Activated T-helper 1 cell treated with anti-CD3 and anti-CD28 coated beads, Interleukin-12 subunit alpha, Interleukin-12 subunit beta, Interleukin-2, Interleukin-4 antibody, amounts not matched to agents 30 ng/mL and 10 ng/mL and 1 ng/mL, durations not matched to agents 14 hours and 24 hours and 36 hours (primary cell): ENCODE measurements at regions of chr3 and their contacts with region 1.

Region 1: DNA sequence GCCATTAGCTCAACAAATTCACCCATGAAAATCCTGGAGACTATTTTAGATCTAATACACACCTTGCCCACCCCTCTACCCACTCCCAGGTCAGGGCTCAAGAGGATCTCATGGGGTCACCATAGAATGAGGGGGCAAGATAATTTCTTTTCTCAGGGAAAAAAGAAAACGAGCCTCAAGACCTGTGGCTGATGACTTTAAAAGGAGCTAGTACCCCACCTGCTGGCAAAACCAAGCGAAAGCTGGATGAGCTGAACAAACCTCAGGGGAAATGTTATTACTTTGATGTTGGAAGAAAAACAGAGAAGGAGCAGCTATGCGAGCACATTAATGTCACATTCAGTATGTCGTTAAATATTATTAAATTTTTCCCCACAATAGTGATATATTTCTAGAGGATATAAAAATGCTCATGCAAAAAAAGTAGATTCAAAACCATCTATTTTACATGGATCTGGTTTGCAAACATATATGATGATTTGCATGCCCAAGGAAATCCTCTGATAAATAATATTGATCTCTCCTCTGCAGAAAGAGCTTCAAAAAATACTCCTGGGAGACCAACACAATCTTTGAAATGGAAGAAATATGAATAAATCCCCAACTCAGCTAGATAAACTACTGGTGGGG is 37.7 kb downstream of the PLD1 start:
- DNase-seq: no peak
- H3K4me3 Mint-ChIP-seq: no peak overlapping the region
- H3K27ac Mint-ChIP-seq: no peak overlapping the region
- H3K4me1 Mint-ChIP-seq: no peaks in the 10 kb centered on the region
- H3K27me3 Mint-ChIP-seq: peaks cover 21% of the 10 kb centered on the region

Region 2: DNA sequence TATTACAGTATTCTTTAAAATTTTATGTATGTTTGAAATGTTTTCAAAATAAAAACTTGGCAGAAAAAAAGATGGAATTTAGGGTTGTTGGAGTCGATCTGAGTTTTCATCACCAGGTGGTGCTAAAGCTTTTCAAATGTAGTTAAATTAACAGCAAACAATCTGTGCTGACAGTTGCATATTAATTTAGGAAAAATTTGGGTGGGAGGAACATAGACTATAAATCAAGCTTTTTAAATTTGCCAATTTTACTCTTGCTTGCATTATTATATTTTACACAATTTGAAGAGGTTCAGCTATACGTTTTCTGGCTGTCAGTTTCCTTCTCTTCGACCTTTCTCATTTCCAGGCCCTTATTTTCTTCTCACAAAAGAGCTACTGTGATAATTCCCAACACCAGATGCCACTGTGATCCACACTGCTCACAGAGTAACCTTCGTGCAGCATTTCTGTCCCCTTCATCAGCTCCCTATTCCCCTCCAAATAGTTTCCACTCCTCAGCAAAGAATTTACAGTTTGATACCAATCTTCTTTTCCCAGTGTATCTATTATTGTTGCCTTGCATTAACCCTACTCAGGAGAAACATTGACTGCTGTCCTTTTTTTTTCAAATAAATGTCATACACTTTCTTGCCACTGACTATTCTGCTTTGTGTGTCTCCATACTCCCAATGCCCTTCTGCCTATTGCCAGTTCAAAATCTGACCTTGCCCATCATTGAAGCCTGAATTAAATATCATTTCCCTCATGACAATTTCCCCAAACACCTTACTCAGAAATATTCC is 810.7 kb before region 1 on chr3:
- intact Hi-C with region 1: loop called (anchors 1 kb)
- DNase-seq: no peak
- H3K4me3 Mint-ChIP-seq: no peak overlapping the region
- H3K27ac Mint-ChIP-seq: no peak overlapping the region
- H3K4me1 Mint-ChIP-seq: no peaks in the 10 kb centered on the region
- H3K27me3 Mint-ChIP-seq: peaks cover 13% of the 10 kb centered on the region

Region 3: GRCh38 chr3:171162986-171163723 is 609.4 kb before region 1 on chr3:
- intact Hi-C with region 1: loop called (anchors 2 kb)
- DNase-seq: no peak
- H3K4me3 Mint-ChIP-seq: no peak overlapping the region
- H3K27ac Mint-ChIP-seq: no peak overlapping the region
- H3K4me1 Mint-ChIP-seq: peaks cover 20% of the 10 kb centered on the region
- H3K27me3 Mint-ChIP-seq: no peaks in the 10 kb centered on the region

Region 4: DNA sequence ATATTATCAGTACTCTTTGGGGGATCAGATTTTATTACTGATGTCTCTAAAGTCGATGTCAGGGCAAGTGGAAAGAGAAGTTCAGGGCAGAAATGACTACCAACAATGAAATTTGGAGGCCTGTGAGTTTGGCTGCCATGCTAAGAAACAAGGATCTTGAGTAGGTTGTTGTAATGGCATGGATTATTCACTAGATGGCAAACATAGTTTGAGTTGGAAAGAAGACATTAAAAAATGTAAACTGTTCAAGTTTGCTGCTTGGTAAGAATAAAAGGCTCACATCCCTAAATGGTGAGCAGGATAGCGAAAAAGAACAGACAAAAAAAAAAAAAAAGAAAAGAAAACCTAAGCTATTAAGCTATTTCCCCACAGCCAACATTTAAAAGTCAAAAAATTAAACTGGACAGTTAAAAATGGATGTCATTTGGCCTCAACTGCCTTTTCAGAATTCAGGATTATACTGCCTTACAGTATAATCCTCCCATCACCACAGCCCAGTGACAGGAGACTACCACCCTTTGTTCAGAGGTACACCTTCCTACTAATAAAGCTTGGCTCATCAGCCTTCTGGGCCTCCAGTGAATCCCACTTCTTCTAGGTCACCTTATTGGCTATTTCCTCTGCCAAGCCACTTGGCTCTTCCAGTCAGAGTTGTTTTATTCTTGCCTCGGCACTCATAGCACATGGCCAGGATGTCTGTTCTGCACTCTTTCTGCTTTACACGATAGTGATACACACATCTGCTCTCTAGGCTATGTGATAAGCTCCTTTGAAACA is 126.0 kb before region 1 on chr3:
- intact Hi-C with region 1: loop called (anchors 1 kb)
- DNase-seq: no peak
- H3K4me3 Mint-ChIP-seq: no peak overlapping the region
- H3K27ac Mint-ChIP-seq: no peak overlapping the region
- H3K4me1 Mint-ChIP-seq: no peaks in the 10 kb centered on the region
- H3K27me3 Mint-ChIP-seq: peaks cover 2% of the 10 kb centered on the region

Region 5: GRCh38 chr3:172341482-172342059 is 569.0 kb after region 1 on chr3:
- intact Hi-C with region 1: loop called (anchors 5 kb)
- DNase-seq: peak; percentile 13
- H3K4me3 Mint-ChIP-seq: no peak overlapping the region
- H3K27ac Mint-ChIP-seq: no peak overlapping the region
- H3K4me1 Mint-ChIP-seq: no peaks in the 10 kb centered on the region
- H3K27me3 Mint-ChIP-seq: no peaks in the 10 kb centered on the region